ENCODE measurements at regions of chr1 and their contacts with region 1.

Region 1: DNA sequence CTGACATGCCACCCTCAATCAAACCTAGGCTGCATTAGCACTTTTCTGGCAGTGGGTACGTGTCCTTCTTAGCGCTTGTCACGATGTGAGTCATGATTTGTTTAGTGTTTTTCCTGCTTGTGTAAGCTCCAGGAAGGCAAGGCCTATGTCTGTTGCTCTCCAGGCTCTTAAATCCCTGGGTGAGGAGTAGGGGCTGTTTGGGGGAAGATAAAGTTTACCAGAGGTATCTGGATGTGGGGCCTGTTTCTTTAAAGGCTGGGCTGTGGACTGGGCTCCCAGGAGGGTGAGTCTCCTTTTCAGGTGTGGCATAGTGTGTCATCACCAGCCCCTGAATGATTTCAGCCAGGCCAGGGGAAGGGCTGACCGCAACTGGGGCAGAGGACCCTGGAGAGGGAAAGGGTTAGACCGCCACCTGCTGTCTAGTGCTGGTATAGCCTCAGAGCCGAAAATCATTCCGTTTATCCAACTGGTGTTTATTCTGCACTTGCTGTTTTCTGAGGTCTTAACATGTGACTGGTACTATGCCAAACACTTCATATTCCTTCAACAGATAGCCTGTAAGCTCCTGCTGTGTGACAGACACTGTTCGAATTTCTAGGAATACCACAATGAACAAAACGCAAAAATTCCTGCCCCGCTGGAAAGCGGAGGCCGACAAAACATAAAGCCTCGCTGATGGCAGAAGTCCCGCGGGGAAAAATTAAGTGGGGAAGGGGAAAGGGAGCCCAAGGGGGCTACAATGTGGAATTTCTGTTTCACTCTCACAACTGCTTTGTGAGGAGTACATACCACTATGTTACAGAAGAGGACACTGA is 9.7 kb downstream of the SERINC2 start:
- DNase-seq: peak; percentile 78
- CTCF ChIP-seq: peak; percentile 81

Region 2: DNA sequence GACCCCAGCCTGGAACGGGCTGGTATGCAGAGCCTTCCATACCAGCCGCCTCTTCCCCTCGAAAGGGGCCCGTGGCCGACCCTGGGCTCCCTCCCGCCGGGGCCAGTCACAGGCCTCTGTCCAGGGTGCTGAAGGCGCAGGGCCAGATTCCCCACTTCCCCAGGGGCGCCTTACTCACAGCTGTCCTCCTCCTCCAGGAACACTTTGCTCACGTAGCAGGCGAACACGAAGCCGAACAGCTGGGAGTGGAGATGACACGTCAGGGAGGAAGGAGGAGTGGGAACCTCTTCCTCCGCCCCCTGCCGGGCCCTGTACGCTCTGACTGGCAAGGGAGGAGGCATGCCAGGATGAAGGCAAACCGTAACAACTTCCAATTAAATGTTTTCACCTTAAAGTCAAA is 240.4 kb before region 1 on chr1:
- CTCF ChIA-PET with region 1: interaction called, 47 read pairs
- POLR2A ChIA-PET with region 1: no interaction called
- DNase-seq: peak; percentile 79
- CTCF ChIP-seq: no peak

Region 3: GRCh38 chr1:31405578-31406245 is 17.0 kb before region 1 on chr1:
- CTCF ChIA-PET with region 1: interaction called, 15 read pairs
- POLR2A ChIA-PET with region 1: no interaction called
- DNase-seq: no peak
- CTCF ChIP-seq: no peak

Region 4: GRCh38 chr1:31444725-31445448 is 22.2 kb after region 1 on chr1:
- CTCF ChIA-PET with region 1: no interaction called
- POLR2A ChIA-PET with region 1: no interaction called
- DNase-seq: no peak
- CTCF ChIP-seq: no peak

Region 5: GRCh38 chr1:31505911-31506497 is 83.3 kb after region 1 on chr1:
- CTCF ChIA-PET with region 1: no interaction called
- POLR2A ChIA-PET with region 1: no interaction called
- DNase-seq: peak; percentile 56
- CTCF ChIP-seq: no peak

Region 6: DNA sequence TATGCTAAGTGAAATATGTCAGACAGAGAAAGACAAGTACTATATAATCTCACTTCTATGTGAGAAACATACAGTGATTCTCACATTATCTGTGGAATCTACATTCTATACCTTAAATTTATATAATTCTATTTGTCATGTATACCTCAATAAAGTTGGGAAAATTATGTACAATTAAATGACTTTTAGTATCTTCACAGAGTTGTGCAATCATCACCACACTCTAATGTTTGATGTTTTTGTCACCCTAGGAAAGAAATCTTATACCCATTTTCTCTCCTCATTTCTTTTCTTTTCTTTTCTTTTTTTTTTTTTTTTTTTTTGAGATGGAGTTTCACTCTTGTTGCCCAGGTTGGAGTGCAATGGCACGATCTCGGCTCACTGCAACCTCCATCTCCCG is 116.6 kb after region 1 on chr1:
- CTCF ChIA-PET with region 1: interaction called, 10 read pairs
- POLR2A ChIA-PET with region 1: no interaction called
- DNase-seq: no peak
- CTCF ChIP-seq: no peak

Region 7: DNA sequence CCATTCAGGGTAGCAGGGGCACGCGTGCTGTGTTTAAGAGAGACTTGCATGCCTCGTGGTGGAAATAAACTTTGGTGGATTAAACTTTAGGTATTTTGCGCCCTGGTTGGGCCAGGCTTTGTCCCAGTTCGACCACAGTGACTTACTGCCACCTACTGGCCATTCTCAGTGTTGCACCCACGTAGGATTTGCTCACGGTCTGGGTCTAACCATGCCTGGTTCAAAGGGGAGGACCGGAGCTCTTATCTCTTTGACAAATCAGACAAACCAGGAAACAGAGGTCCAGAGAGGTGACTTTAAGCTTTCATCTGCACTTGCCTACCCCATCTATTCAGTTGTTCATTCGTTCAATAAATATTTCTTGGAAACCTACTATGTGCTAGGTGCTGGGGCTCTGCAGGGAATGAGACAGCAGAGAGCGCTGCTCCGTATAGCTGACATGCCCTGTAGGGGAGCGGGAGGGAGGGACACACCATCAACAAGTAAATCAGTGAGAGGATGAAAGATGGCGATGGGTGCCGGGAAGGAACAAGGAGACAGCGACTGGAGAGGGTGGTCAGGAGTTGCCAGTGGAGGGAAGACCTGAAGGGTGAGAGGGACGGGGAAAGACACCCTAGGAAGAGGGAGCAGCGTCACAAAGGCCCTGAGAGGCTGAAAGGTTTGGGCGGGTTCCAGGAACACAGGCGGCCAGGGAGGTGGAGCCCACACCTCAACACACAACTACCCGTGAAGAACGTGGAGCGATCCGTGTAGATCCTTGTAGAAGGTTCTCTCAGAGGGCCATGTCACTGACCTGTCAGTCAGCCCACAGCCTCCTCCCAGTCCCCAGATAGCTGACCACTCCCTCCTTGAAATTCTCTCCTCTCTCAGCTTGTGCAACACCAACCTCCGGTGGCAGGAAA is 126.4 kb after region 1 on chr1:
- CTCF ChIA-PET with region 1: interaction called, 61 read pairs
- POLR2A ChIA-PET with region 1: no interaction called
- DNase-seq: peak; percentile 87
- CTCF ChIP-seq: peak; percentile 89

Measured in GM10248 (cell line).